AG04449 (cell line): ENCODE measurements at regions of chrX and their contacts with region 1.

Region 1: GRCh38 chrX:46796574-46797191 is 37.8 kb upstream of the SLC9A7 start:
- DNase-seq: no peak
- H3K4me3 ChIP-seq: no peak overlapping the region
- CTCF ChIP-seq: peak; percentile 57

Region 2: DNA sequence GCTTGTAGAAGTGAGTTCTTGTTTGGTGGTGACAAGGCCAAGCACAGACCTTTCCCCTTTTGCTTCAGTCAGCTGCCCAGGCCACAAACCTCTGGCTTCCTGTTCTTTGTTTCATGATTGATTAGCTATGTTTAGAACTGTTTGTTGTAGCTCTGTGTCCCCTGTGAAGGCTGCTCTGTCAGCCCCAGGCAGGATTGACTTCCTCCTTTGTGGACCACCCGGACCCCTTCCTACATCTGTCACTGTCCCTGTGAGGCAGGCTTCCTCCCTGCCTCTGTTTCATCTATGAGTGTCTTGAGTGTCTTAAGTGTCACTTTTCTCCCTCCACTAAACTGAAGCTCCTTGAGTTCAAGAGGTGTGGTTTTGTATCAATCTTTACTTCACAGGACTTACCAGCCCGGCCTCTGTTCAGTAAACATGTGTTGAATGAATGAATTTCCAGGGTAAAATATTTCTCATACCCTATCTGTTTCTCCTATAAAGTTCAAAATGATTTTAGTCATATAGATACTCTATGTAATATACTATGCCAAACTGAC is 335.0 kb before region 1 on chrX:
- CTCF ChIA-PET with region 1: no interaction called
- POLR2A ChIA-PET with region 1: no interaction called
- DNase-seq: no peak
- H3K4me3 ChIP-seq: no peak overlapping the region
- CTCF ChIP-seq: no peak

Region 3: GRCh38 chrX:46554942-46555341 is 241.7 kb before region 1 on chrX:
- CTCF ChIA-PET with region 1: interaction called, 18 read pairs
- POLR2A ChIA-PET with region 1: no interaction called
- DNase-seq: no peak
- H3K4me3 ChIP-seq: no peak overlapping the region
- CTCF ChIP-seq: no peak

Region 4: DNA sequence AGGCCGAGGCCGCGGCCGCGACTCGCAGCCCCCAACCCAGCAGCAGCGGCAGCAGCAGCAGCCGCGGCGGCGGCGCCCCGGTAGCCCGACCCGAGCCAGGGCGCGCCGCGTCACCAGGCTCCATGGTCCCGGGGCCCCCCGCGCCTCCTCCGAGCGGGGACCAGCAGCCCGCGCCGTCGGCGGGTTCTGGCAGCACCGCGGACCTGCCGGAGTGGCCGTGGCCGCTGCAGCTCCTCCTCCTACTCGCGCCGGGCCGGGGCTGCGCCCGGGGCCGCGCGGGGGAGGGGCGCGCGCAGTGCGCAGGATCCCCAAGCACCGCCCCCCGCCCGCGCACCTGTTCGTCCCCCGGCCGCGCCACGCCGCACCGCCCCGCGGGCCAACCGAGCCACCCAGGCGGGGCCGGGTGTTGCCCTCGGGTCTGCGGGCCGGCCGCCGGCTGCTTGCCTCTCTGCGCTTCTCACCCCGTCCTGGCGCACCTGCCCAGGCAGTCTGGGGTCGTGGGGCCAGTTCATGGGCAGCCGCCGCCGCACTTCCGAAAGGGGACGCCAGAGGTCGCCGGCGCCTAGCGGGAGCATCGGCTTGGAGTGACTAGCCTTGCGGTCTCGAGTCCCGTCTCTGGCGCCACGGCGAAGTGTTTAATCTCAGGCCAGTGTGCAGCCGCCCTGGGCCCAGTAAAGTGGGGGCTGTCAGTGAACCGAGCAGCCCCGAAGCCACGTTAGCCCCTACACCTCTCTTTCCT is 37.6 kb before region 1 on chrX and contains the start of gene SLC9A7:
- CTCF ChIA-PET with region 1: interaction called, 70 read pairs
- POLR2A ChIA-PET with region 1: interaction called, 8 read pairs
- DNase-seq: no peak
- H3K4me3 ChIP-seq: peak within 1 kb of the TSS; percentile 71
- CTCF ChIP-seq: peak; percentile 91

Region 5: DNA sequence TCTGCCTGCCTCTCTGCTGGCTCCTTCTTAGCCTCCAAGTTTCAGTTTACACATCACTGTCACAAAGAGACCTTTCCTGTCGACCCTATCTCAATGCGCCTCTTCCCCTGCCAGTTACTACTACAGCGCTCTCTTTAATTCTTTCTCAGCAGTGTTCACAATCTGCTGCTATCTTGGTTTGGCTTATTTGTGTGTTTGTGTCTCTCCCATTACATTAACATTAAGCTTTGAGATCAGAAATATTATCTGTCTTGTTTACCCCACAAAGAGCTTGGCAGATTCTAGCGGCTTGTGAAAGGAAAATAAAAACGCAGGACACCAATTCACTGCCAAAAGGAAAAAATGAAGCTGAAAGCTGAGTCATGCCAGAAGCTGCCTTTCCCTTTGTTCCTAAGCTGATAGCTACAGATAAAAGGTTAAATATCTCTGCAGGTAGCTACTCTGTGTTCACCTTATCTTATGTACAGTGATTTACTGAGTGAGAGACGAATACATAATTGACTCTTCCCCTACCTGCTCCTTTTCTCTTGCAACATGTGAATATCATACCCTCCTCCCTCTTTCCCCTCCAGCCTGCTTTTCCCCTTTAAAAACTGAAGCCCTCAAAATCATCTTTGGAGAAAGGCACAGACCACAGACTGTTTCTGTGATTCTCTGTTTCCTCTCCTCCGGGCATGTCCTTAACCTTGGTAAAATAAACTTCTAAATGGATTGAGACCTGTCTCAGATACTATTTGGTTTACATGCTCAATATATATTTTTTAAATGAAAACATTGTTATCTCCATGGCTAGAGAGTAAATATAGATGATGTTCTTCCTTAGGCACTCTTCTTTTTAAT is 18.5 kb before region 1 on chrX:
- CTCF ChIA-PET with region 1: no interaction called
- POLR2A ChIA-PET with region 1: no interaction called
- DNase-seq: no peak
- H3K4me3 ChIP-seq: no peak overlapping the region
- CTCF ChIP-seq: no peak

Region 6: GRCh38 chrX:46922611-46923010 is 125.9 kb after region 1 on chrX:
- CTCF ChIA-PET with region 1: no interaction called
- POLR2A ChIA-PET with region 1: no interaction called
- DNase-seq: no peak
- H3K4me3 ChIP-seq: no peak overlapping the region
- CTCF ChIP-seq: no peak